RWPE1 (cell line): ENCODE measurements at regions of chr22 and their contacts with region 1.

Region 1: DNA sequence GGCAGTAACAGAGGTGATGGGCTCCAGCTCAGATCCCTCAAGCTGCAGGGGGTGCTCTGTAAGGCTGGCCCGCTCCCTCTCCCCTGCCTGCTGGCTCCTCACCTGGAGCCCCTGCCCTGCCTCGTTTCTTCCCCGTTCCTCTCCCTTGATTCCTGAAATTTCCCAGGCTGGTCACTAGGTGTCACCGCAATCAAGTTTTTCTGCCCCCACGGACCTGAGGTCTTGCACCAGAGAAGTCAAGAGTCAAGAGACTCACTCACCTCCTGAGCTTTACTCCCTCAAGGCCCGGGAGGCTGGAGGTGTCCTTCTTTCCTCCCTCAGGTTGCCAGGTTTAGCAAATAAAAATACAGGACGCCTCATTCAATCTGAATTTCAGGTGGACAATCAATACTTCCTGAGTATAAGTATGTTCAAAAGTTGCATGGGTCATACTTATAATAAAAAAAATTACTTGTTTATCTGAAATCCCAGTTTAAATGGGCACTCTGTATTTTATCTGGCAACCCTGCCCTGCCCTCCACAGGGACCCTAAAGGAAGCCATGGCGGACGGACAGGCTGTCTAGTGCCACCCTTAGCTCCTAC is 69.2 kb downstream of the SCUBE1 start:
- DNase-seq: peak; percentile 67
- H3K27ac ChIP-seq: no peak overlapping the region
- CTCF ChIP-seq: peak; percentile 75

Region 2: GRCh38 chr22:43346521-43346929 is 72.5 kb after region 1 on chr22:
- CTCF ChIA-PET with region 1: interaction called, 33 read pairs
- POLR2A ChIA-PET with region 1: no interaction called
- DNase-seq: peak; percentile 59
- H3K27ac ChIP-seq: no peak overlapping the region
- CTCF ChIP-seq: peak; percentile 56

Region 3: DNA sequence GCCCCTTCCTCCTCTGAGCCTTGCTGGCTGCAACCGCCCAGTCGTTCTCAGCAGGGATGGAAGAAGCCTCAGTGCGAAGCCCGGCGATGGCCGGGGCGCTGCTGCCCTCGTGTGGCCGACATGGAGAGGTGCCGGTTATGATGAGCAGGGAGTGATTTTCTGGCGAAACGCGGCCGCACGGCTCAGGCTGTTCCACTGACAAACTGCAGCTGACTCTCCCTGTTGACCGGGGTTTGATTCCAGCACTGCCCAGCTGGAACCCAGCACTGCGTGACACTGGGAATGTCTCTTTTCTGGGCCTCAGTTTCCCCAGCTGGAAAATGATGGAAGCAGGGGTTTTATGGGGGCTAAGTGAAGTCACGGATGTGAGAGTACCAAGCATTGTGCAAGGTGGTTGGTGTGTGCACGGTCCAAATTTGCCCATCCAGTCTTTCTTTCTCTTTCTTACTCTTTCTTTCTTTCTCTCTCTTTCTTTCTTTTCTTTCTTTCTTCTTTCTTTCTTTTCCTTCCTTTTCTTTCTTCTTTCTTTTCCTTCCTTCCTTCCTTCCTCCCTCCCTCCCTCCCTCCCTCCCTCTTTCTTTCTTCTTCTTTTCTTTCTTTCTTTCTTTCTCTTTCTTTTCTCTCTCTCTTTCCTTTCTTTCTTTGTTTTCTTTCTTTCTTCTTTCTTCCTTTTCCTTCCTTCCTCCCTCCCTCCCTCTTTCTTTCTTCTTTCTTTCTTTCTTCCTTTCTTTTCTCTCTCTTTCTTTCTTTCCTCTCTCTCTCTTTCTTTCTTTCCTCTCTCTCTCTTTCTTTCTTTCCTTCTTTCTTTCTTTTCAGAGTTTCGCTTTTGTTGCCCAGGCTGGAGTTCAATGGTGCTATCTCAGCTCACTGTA is 112.0 kb after region 1 on chr22:
- CTCF ChIA-PET with region 1: interaction called, 10 read pairs
- POLR2A ChIA-PET with region 1: no interaction called
- DNase-seq: peak; percentile 71
- H3K27ac ChIP-seq: no peak overlapping the region
- CTCF ChIP-seq: peak; percentile 90

Region 4: DNA sequence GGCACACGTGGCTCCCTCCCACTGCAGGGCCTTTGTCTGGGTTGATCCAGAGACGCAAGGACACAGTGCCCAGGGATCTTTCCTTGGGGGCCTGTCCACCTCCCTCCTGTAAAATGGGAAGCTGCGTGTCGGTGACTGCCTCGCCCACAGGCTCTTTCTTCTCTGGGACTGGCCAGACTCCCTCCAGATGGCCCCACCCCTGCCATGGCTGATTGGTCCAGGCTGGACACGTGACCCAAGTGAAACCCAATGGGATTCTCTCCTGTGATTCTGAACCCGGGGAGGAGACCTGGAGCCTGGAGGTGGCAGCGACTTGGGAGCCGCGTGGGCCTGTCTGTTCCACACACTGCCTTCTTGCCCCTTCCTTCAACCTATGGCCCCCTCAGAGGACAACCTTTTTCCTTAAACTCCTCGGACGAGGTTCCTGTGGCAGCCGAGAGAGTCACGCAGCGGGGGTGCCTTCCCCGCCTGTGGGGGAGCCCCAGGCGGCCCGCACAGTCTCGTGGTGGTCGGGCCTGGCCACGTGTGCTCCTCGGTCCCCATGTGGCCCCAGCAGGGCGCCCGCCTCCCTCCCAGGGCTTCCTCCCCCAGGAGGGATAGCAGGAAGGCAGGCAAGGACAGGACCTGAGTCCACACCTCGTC is 125.5 kb after region 1 on chr22:
- CTCF ChIA-PET with region 1: no interaction called
- POLR2A ChIA-PET with region 1: no interaction called
- DNase-seq: no peak
- H3K27ac ChIP-seq: no peak overlapping the region
- CTCF ChIP-seq: no peak